Right cardiac atrium (tissue), 5 donors: ENCODE measurements at regions of chr19 and their contacts with region 1.

Region 1: GRCh38 chr19:41353466-41354342 is at the start of gene TGFB1:
- DNase-seq: peak; percentile 90 to 97 (median 96)
- ATAC-seq: peak; percentile 71 to 83
- H3K4me3 ChIP-seq: peak within 1 kb of the TSS; percentile 93
- H3K27ac ChIP-seq: peak within 1 kb of the TSS; percentile 79
- H3K4me1 ChIP-seq: peaks cover 3% of the 10 kb centered on the region
- H3K27me3 ChIP-seq: no peaks in the 10 kb centered on the region
- total RNA-seq, gene TGFB1: 27.0 to 39.3 (median 33.3) TPM

Region 2: GRCh38 chr19:41321600-41322270 is 32.0 kb before region 1 on chr19:
- intact Hi-C with region 1: loop called in 1 of 4 experiments (anchors 5 kb)
- DNase-seq: peak; percentile 60 to 77 (median 76)
- ATAC-seq: peak; percentile 3 to 13
- H3K4me3 ChIP-seq: no peak overlapping the region
- H3K27ac ChIP-seq: peak overlapping the region; percentile 80
- H3K4me1 ChIP-seq: peaks cover 12% of the 10 kb centered on the region
- H3K27me3 ChIP-seq: no peaks in the 10 kb centered on the region

Region 3: GRCh38 chr19:41439441-41440222 is 85.9 kb after region 1 on chr19 and contains the start of gene DMAC2:
- intact Hi-C with region 1: loop called in 1 of 4 experiments (anchors 10 kb)
- DNase-seq: peak; percentile 97 to 98 (median 98)
- ATAC-seq: peak; percentile 98
- H3K4me3 ChIP-seq: peak within 1 kb of the TSS; percentile 89
- H3K27ac ChIP-seq: peak within 1 kb of the TSS; percentile 99
- H3K4me1 ChIP-seq: no peaks in the 10 kb centered on the region
- H3K27me3 ChIP-seq: no peaks in the 10 kb centered on the region
- total RNA-seq, gene DMAC2: 52.6 to 86.8 (median 77.5) TPM